Activated T-helper 1 cell treated with anti-CD3 and anti-CD28 coated beads, Interleukin-12 subunit alpha, Interleukin-12 subunit beta, Interleukin-2, Interleukin-4 antibody, amounts not matched to agents 30 ng/mL and 10 ng/mL and 1 ng/mL, durations not matched to agents 14 hours and 24 hours and 36 hours (primary cell): ENCODE measurements at regions of chr1 and their contacts with region 1.

Region 1: GRCh38 chr1:6199298-6200187 is at the start of gene RPL22:
- DNase-seq: peak; percentile 96
- H3K4me3 Mint-ChIP-seq: peak within 1 kb of the TSS; percentile 94
- H3K27ac Mint-ChIP-seq: peak within 1 kb of the TSS; percentile 92
- H3K4me1 Mint-ChIP-seq: peaks cover 44% of the 10 kb centered on the region
- H3K27me3 Mint-ChIP-seq: peaks cover 2% of the 10 kb centered on the region
- total RNA-seq, gene RPL22: 421 and 457 TPM in 2 replicates

Region 2: DNA sequence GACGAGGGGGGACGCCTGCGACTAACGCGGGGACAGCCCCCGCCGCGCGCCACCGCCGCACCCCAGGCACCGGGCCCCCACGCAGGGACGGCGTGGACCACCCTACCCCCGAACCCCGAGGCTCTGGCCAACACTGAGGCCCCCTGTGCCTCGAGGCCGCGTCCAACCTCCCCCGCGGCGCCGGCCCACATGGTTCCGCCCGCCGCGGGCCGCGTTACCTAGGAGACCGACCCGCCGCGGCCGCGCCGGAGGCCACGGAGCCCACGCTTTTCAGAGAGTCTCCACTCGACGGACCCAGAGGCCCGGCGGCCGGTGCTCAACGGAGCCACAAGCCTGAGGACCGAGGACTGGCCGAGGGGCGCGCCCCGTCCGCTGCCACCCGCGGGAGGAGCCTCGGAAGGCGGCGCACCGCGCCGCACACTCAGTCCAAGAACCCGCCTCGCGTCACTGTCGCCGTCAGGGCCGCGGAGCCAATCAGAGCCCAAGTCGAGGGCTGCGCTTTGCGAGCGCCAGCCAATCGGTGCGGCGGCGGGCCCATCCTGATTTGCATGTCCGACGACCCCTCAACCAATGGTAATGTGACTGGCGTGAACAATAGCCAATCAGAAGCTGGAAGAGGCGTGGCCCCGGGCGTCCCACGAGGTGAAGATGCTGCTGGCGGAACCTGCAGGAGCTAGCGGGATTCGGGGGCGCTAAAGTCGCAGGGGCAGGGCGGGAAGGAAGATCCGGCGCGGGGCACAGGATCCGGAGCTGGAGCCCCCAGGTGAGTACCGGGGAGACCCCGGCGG is 207.3 kb before region 1 on chr1 and contains the start of gene NPHP4:
- intact Hi-C with region 1: loop called (anchors 1 kb)
- DNase-seq: peak; percentile 100
- H3K4me3 Mint-ChIP-seq: peak within 1 kb of the TSS; percentile 95
- H3K27ac Mint-ChIP-seq: peak within 1 kb of the TSS; percentile 98
- H3K4me1 Mint-ChIP-seq: peaks cover 38% of the 10 kb centered on the region
- H3K27me3 Mint-ChIP-seq: no peaks in the 10 kb centered on the region
- total RNA-seq, gene NPHP4: 18.3 and 18.6 TPM in 2 replicates

Region 3: GRCh38 chr1:6127587-6128163 is 71.9 kb before region 1 on chr1:
- intact Hi-C with region 1: loop called (anchors 2 kb)
- DNase-seq: peak; percentile 50
- H3K4me3 Mint-ChIP-seq: no peak overlapping the region
- H3K27ac Mint-ChIP-seq: no peak overlapping the region
- H3K4me1 Mint-ChIP-seq: no peaks in the 10 kb centered on the region
- H3K27me3 Mint-ChIP-seq: no peaks in the 10 kb centered on the region

Region 4: GRCh38 chr1:6235296-6235677 is 35.7 kb after region 1 on chr1:
- intact Hi-C with region 1: loop called (anchors 1 kb)
- DNase-seq: peak; percentile 14
- H3K4me3 Mint-ChIP-seq: peak overlapping the region; percentile 91
- H3K27ac Mint-ChIP-seq: peak overlapping the region; percentile 87
- H3K4me1 Mint-ChIP-seq: peaks cover 19% of the 10 kb centered on the region
- H3K27me3 Mint-ChIP-seq: peaks cover 9% of the 10 kb centered on the region

Region 5: DNA sequence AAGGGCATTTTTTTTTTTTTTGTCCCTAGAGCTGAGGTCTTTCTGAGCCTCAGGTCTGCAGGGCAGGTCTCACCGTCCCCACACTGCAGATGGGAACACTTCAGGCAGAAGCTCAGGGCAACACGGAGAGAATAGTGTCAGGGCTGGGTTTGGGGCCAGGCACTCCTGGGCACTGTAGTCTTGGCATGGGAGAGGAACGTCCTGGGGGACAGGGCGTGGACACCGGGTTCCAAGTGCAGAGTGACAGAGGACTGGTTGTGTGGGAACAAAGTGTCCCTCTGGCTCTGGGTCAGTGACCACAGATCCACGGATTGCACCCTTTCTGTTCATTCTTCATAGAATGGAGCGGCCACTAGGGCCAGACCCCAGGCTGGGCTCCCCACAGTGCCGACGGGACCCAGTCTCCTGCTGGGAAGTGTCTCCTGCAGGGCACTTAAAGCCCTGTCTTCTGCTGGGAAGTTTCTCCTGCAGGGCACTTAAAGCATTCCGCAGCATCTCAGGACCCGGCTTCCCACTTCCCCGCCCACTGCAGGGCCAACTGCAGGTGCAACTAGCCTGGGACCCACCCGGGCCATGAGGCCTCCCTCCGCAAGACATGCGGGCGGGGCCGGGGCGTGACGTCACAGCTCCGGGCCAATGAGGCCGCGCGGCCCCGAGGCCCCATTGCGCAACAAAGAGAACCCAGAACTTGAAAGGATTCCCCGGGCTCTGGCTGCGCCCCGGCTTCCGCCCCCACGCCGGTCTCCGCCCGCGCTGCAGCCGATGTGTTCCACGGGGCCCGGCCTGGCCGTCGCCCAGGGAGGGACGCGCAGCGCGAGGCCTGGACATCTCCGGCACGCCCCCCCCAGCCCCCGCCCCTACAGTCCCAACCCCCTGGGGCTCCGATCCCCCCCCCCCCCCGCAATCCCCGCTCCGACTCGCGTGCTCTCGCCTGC is 60.2 kb after region 1 on chr1:
- intact Hi-C with region 1: no loop called
- DNase-seq: peak; percentile 80
- H3K4me3 Mint-ChIP-seq: peak overlapping the region; percentile 46
- H3K27ac Mint-ChIP-seq: no peak overlapping the region
- H3K4me1 Mint-ChIP-seq: no peaks in the 10 kb centered on the region
- H3K27me3 Mint-ChIP-seq: peaks cover 12% of the 10 kb centered on the region

Region 6: GRCh38 chr1:6464514-6464836 is 264.9 kb after region 1 on chr1:
- intact Hi-C with region 1: loop called (anchors 1 kb)
- DNase-seq: no peak
- H3K4me3 Mint-ChIP-seq: peak overlapping the region; percentile 99
- H3K27ac Mint-ChIP-seq: peak overlapping the region; percentile 91
- H3K4me1 Mint-ChIP-seq: peaks cover 41% of the 10 kb centered on the region
- H3K27me3 Mint-ChIP-seq: no peaks in the 10 kb centered on the region

Region 7: DNA sequence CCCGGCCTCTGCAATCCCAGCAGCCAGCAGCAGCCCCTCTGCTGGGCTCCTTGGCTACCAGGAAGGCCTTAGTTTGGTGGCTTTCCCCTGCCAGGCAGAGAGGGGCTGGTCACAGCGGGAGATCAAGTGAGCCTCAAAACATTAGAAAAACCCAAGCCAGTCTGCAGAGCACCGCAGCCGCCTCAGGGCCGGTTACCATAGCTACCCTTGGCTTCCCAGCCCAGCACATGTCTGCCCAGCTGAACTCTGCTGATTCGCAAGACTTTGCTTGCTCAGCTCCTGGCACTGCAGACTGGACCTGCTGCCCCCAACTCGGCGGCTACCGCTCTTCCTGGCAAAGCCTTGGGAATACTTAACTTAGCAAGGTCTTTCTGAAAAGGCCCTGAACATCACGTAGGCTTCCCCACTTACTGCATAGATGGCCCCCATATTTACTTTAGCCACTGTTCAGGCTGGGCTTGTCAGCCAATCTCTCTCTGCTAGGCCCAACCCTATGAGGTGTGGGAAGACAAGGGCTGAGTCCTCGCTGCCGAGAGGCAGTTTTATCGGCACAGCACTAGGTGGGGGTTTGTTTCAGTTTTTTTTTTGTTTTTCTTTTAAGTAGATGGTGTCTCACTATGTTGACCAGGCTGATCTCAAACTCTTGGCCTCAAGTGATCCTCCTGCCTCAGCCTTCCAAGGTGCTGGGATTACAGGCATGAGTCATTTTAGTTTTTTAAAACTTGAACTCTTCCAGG is 320.6 kb after region 1 on chr1:
- intact Hi-C with region 1: no loop called
- DNase-seq: no peak
- H3K4me3 Mint-ChIP-seq: no peak overlapping the region
- H3K27ac Mint-ChIP-seq: no peak overlapping the region
- H3K4me1 Mint-ChIP-seq: no peaks in the 10 kb centered on the region
- H3K27me3 Mint-ChIP-seq: no peaks in the 10 kb centered on the region